GM10248 (cell line): ENCODE measurements at regions of chr7 and their contacts with region 1.

Region 1: GRCh38 chr7:141710301-141710700 is 2.1 kb downstream of the WEE2 start:
- DNase-seq: no peak
- CTCF ChIP-seq: peak; percentile 28

Region 2: DNA sequence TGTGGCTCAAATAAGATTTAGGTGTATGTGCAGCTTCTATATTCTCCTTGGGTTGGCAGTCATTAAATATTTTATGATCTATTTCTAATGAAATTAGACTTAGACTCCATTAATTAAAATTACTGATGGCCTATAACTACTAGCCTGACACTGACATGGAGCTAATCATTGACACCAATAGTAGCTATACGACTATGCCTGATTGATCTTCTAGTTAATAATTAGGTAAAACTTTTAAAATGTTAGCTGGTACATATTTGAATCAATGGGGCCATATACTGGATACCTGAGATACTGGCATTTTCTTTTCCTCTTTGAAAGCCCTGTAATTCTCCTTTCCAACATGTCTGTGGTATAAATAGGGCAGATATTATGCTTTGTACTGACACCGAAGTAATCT is 12.2 kb after region 1 on chr7:
- CTCF ChIA-PET with region 1: interaction called, 10 read pairs
- POLR2A ChIA-PET with region 1: no interaction called
- DNase-seq: no peak
- CTCF ChIP-seq: no peak

Region 3: GRCh38 chr7:141820067-141820466 is 109.8 kb after region 1 on chr7:
- CTCF ChIA-PET with region 1: no interaction called
- POLR2A ChIA-PET with region 1: no interaction called
- DNase-seq: no peak
- CTCF ChIP-seq: no peak

Region 4: GRCh38 chr7:142177869-142178268 is 467.6 kb after region 1 on chr7:
- CTCF ChIA-PET with region 1: no interaction called
- POLR2A ChIA-PET with region 1: no interaction called
- DNase-seq: no peak
- CTCF ChIP-seq: no peak